Activated T-helper 2 cell treated with anti-CD3 and anti-CD28 coated beads, Interferon-gamma antibody, Interleukin-2, Interleukin-4, amounts not matched to agents 10 μg/mL and 5 μg/mL and 100 μg/mL, durations not matched to agents 14 hours and 24 hours and 36 hours (primary cell): ENCODE measurements at regions of chr11 and their contacts with region 1.

Region 1: GRCh38 chr11:123800036-123800435 is 6.1 kb downstream of the OR6M1 start:
- DNase-seq: no peak
- H3K4me3 Mint-ChIP-seq: no peak overlapping the region
- H3K27ac Mint-ChIP-seq: no peak overlapping the region
- H3K4me1 Mint-ChIP-seq: no peaks in the 10 kb centered on the region
- H3K27me3 Mint-ChIP-seq: peaks cover 3% of the 10 kb centered on the region

Region 2: DNA sequence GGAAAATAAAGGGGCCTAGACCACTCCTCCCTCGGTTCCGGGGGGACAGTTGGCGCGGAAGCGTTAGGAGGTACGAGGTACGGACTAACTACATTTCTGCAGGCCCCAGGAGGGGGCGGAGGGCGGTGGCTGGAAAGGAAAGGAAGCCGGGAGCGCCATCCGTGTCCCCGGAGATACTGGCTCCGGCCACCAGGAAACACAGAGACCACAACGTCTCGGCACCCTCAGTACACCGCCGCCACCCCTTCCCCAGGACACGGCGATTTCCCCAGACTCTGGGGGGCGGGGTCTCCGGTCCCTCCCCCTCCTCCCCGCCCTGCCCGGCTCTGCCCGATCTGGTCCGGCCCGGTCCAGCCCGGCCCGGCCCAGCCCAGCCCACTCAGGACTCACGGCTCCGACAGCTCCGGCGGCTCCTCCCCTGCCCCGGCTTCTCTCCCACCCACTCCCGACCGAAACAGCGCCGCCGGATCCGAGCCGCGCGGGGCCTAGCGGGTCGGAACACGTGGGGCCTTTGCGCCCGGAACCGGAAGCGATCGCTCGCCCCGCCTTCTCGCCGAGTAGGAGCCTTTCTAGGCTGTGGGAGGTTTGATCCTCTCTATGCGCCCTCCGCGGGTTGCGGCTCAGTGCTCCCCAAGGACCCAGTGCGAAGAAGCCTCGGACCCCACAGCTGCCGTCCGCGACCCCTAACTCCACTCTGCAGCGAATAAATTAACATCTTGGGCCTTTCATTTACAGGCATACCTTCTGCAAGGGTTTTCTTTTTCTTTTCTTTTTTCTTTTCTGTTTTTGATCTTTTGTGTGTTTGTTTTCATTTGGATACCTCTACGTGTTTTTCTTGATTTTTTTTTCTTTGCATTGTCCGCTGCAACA is 58.6 kb before region 1 on chr11 and contains the start of gene ZNF202:
- intact Hi-C with region 1: loop called (anchors 5 kb)
- DNase-seq: peak; percentile 86
- H3K4me3 Mint-ChIP-seq: peak within 1 kb of the TSS; percentile 89
- H3K27ac Mint-ChIP-seq: peak within 1 kb of the TSS; percentile 87
- H3K4me1 Mint-ChIP-seq: peaks cover 33% of the 10 kb centered on the region
- H3K27me3 Mint-ChIP-seq: peaks cover 10% of the 10 kb centered on the region
- total RNA-seq, gene ZNF202: 19.2 and 22.3 TPM in 2 replicates